Transverse colon (tissue), 4 donors: ENCODE measurements at regions of chr3 and their contacts with region 1.

Region 1: GRCh38 chr3:45210308-45211041 is 15.6 kb downstream of the TMEM158 start:
- DNase-seq: peak; percentile 90
- H3K4me3 ChIP-seq: no peak overlapping the region
- H3K27ac ChIP-seq: peak overlapping the region in 3 of 4 donors; percentile 49 to 74 (median 70)
- H3K4me1 ChIP-seq: peaks cover 0 to 30% (median 16%) of the 10 kb centered on the region in 4 donors
- H3K27me3 ChIP-seq: no peaks in the 10 kb centered on the region
- CTCF ChIP-seq: peak; percentile 74 to 98 (median 79)
- EP300 ChIP-seq: no peak
- POLR2A ChIP-seq: no peak

Region 2: GRCh38 chr3:45037734-45038455 is 172.6 kb before region 1 on chr3:
- in situ Hi-C with region 1: loop called (anchors 5 to 10 kb)
- intact Hi-C with region 1: loop called (anchors 5 kb)
- DNase-seq: peak; percentile 95
- H3K4me3 ChIP-seq: peak overlapping the region in 1 of 4 donors; percentile 13
- H3K27ac ChIP-seq: peak overlapping the region in 1 of 4 donors; percentile 33
- H3K4me1 ChIP-seq: peaks cover 14 to 39% (median 25%) of the 10 kb centered on the region in 4 donors
- H3K27me3 ChIP-seq: no peaks in the 10 kb centered on the region
- CTCF ChIP-seq: peak; percentile 87 to 99 (median 91)
- EP300 ChIP-seq: no peak
- POLR2A ChIP-seq: no peak

Region 3: DNA sequence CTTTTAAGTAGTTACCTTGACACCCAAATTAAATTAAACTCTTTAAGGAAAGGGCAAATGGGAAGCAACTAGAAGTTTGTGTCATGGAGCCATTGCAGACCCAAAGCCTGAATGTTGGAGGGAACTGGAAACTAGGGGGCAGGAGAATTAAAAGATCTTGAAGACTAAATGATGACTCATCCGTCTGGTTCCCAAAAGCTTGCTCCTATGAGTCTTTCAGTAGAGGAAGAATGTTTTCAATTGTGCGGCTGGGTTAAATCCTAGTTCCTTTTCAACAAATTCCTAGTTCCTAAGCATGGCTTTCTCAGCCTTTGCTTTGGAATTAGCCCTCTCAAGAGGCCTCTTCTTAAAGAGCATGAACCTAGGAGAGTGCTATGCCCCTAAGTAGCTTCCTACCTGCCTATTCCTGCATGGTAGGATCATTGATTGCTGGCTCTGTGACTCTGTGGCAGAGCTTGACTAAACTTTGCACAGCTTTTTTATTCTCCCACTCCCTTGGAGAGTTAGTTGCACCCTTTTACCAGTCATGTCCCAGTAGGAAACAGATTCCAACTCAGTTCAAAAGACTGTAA is 166.7 kb before region 1 on chr3:
- in situ Hi-C with region 1: loop called (anchors 5 to 10 kb)
- intact Hi-C with region 1: loop called (anchors 5 kb)
- DNase-seq: no peak
- H3K4me3 ChIP-seq: no peak overlapping the region
- H3K27ac ChIP-seq: peak overlapping the region; percentile 7 to 47 (median 29)
- H3K4me1 ChIP-seq: peaks cover 0 to 19% (median 6%) of the 10 kb centered on the region in 4 donors
- H3K27me3 ChIP-seq: no peaks in the 10 kb centered on the region
- CTCF ChIP-seq: no peak
- EP300 ChIP-seq: no peak
- POLR2A ChIP-seq: no peak

Region 4: GRCh38 chr3:45306406-45307008 is 96.0 kb after region 1 on chr3:
- in situ Hi-C with region 1: no loop called
- intact Hi-C with region 1: no loop called
- DNase-seq: no peak
- H3K4me3 ChIP-seq: no peak overlapping the region
- H3K27ac ChIP-seq: no peak overlapping the region
- H3K4me1 ChIP-seq: no peaks in the 10 kb centered on the region
- H3K27me3 ChIP-seq: peaks cover 1% of the 10 kb centered on the region
- CTCF ChIP-seq: no peak
- EP300 ChIP-seq: no peak
- POLR2A ChIP-seq: no peak